ENCODE measurements at regions of chr15 and their contacts with region 1.

Region 1: DNA sequence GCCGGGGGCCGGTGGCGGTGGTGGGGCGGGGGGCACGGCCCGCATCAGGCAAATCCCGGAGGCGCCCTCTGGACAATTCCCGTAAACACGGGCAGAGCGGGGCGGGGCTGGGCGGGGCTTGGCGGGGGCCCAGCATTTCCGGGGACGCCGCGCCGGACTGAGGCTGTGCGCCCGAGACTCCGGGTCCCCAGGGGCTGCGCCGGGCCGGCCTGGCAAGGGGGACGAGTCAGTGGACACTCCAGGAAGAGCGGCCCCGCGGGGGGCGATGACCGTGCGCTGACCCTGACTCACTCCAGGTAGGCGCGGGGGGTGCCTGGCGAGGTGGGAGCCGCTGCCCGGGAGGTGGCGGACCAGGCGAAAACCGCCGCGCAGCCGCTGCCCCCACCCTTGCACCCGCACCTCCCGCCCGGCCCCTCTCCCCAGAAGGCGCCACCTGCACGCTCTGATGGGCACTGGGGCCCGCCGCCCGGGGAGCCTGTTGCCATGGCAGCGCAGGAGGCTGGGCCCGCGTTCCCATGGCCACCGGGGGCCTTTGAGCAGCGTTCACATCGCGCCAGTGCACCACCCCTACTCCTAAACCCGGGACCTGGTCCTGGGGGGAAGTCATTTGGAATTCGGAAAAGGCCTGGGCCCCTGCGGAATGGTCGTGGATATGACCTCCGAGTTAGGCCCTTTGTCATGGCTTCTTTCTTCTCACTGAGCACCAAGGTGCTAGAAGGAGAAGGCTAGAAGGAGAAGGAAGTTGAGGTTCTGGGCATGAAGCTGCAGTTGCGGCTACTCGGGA is 16.2 kb upstream of the SEMA4B start:
- DNase-seq: peak; percentile 27 to 71 (median 55)
- ATAC-seq: peak; percentile 84
- H3K4me3 ChIP-seq: peak overlapping the region; percentile 47 to 61
- H3K4me3 Mint-ChIP-seq: peak overlapping the region; percentile 82
- H3K27ac ChIP-seq: no peak overlapping the region
- H3K27ac Mint-ChIP-seq: peak overlapping the region; percentile 57
- H3K4me1 ChIP-seq: peaks cover 10% of the 10 kb centered on the region
- H3K4me1 Mint-ChIP-seq: peaks cover 12% of the 10 kb centered on the region
- H3K27me3 ChIP-seq: no peaks in the 10 kb centered on the region
- H3K27me3 Mint-ChIP-seq: no peaks in the 10 kb centered on the region
- CTCF ChIP-seq: no peak

Region 2: DNA sequence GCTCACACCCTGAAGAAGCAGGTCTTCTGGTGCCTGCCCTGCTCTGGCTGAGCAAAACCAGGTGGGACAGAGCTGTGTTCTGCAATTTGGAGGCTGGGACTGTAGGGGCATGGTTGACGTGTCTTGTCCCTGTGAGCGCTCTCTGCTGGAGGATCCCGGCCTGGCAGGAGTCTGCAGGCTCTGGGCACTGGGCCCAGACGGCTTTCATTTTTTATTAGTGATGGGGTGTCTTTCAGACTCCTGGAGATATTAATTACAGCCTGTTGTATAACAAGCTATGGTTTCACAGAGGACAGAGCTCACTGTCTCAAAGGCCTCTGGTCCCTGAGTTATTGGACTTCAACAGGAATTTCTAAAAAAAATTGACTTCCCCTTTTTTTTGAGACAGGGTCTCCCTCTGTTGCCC is 213.4 kb before region 1 on chr15:
- CTCF ChIA-PET with region 1: no interaction called
- POLR2A ChIA-PET with region 1: no interaction called
- intact Hi-C with region 1: no loop called
- DNase-seq: peak; percentile 2 to 62 (median 31)
- ATAC-seq: peak; percentile 54
- H3K4me3 ChIP-seq: no peak overlapping the region
- H3K4me3 Mint-ChIP-seq: no peak overlapping the region
- H3K27ac ChIP-seq: no peak overlapping the region
- H3K27ac Mint-ChIP-seq: no peak overlapping the region
- H3K4me1 ChIP-seq: no peaks in the 10 kb centered on the region
- H3K4me1 Mint-ChIP-seq: no peaks in the 10 kb centered on the region
- H3K27me3 ChIP-seq: no peaks in the 10 kb centered on the region
- H3K27me3 Mint-ChIP-seq: no peaks in the 10 kb centered on the region
- CTCF ChIP-seq: peak; percentile 41

Region 3: DNA sequence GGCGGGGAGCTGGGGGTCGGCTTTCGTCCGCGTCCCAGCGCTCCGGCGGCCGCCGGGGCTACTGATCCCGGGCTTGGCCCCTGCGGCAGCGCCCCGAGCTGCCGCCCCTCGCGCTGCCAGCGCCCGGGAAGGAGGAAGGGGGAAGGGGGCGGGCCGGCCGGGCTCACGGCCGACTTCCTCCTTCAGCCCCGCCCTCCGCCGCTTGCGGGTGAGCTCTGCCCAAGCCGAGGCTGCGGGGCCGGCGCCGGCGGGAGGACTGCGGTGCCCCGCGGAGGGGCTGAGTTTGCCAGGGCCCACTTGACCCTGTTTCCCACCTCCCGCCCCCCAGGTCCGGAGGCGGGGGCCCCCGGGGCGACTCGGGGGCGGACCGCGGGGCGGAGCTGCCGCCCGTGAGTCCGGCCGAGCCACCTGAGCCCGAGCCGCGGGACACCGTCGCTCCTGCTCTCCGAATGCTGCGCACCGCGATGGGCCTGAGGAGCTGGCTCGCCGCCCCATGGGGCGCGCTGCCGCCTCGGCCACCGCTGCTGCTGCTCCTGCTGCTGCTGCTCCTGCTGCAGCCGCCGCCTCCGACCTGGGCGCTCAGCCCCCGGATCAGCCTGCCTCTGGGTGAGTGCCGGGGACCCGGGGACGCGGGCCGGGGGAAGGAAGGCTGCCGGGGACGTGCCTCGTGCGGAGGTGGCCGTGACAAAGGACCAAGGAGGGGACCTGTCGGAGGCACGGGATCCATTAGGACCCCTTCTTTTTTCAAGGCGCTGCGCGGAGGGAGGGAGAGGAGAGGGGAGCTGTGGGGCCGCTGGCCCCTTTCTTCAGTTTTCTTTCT is 16.4 kb after region 1 on chr15 and contains the start of gene SEMA4B:
- CTCF ChIA-PET with region 1: interaction called, 3 read pairs
- POLR2A ChIA-PET with region 1: interaction called, 4 read pairs
- intact Hi-C with region 1: loop called in 1 of 2 experiments (anchors 1 kb)
- DNase-seq: peak; percentile 37 to 86 (median 74)
- ATAC-seq: peak; percentile 91
- H3K4me3 ChIP-seq: peak within 1 kb of the TSS; percentile 69 to 79
- H3K4me3 Mint-ChIP-seq: peak within 1 kb of the TSS; percentile 88
- H3K27ac ChIP-seq: peak within 1 kb of the TSS; percentile 56 to 60
- H3K27ac Mint-ChIP-seq: peak within 1 kb of the TSS; percentile 82
- H3K4me1 ChIP-seq: peaks cover 21% of the 10 kb centered on the region
- H3K4me1 Mint-ChIP-seq: peaks cover 22% of the 10 kb centered on the region
- H3K27me3 ChIP-seq: no peaks in the 10 kb centered on the region
- H3K27me3 Mint-ChIP-seq: no peaks in the 10 kb centered on the region
- CTCF ChIP-seq: no peak
- total RNA-seq, gene SEMA4B: 7.5 to 12.3 TPM

Region 4: GRCh38 chr15:91214675-91215590 is 1030.0 kb after region 1 on chr15:
- CTCF ChIA-PET with region 1: no interaction called
- POLR2A ChIA-PET with region 1: no interaction called
- intact Hi-C with region 1: no loop called
- DNase-seq: no peak
- ATAC-seq: no peak
- H3K4me3 ChIP-seq: no peak overlapping the region
- H3K4me3 Mint-ChIP-seq: no peak overlapping the region
- H3K27ac ChIP-seq: no peak overlapping the region
- H3K27ac Mint-ChIP-seq: no peak overlapping the region
- H3K4me1 ChIP-seq: no peaks in the 10 kb centered on the region
- H3K4me1 Mint-ChIP-seq: no peaks in the 10 kb centered on the region
- H3K27me3 ChIP-seq: no peaks in the 10 kb centered on the region
- H3K27me3 Mint-ChIP-seq: peaks cover 26% of the 10 kb centered on the region
- CTCF ChIP-seq: no peak

Measured in CD8-positive, alpha-beta T cell (primary cell).